ENCODE measurements at regions of chr16 and their contacts with region 1.

Region 1: DNA sequence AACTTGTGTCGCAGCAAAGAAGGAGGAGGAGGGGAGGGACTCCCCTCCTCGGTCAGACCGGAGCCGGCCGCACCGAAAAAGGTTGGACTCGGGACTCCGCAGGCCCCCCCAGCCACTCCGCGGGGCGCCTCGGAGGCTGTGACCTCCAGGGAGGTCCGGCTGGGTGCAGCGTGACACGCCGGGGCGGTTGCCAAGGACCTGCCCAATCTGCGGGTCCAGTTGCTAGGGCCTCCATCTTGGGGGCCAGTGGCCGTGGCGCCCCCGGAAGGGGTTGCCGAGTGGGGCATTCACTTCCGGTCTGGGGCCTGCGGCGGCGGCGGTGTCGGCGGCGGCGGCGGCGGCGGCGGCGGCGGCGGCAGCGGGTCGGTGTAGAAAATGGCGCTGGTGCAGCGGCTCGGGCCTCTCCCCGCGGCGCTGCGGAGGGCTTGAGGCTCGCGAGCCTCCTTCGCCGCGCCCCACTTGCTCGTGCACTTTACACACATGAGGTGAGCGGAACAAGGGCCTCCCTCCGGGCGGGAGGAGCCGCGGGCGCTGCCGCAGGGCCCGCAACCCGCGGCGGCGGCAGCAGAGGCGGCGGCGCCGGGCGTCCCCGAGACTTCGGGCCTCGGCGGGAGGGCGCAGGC is at the start of gene TNRC6A:
- DNase-seq: peak; percentile 87
- ATAC-seq: peak; percentile 77
- H3K4me3 Mint-ChIP-seq: peak within 1 kb of the TSS; percentile 99
- H3K27ac Mint-ChIP-seq: peak within 1 kb of the TSS; percentile 99
- H3K4me1 Mint-ChIP-seq: peaks cover 44% of the 10 kb centered on the region
- H3K27me3 Mint-ChIP-seq: no peaks in the 10 kb centered on the region
- total RNA-seq, gene TNRC6A: 34.6 to 46.1 TPM

Region 2: DNA sequence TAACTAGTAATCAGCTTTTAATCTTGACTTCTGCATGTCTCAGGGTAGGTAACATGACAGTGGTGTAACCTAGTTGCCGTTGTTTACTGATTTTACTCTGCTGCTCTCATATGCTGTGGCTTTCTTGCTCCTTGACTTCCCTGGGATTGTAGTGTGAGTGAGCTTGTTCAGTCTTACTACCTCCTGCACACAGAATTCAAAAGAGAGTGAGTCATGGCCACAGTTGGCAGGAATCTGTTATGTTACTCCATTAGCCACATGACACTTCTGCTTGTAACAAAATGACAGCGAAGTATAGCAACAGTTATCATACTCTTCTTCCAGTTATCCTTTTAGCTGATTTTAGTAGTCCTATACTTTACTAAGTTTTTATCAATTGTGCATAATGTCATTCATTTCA is 18.8 kb after region 1 on chr16:
- CTCF ChIA-PET with region 1: interaction called, 6 read pairs
- POLR2A ChIA-PET with region 1: interaction called, 8 read pairs
- intact Hi-C with region 1: loop called (anchors 1 kb)
- DNase-seq: peak; percentile 40
- ATAC-seq: peak; percentile 91
- H3K4me3 Mint-ChIP-seq: no peak overlapping the region
- H3K27ac Mint-ChIP-seq: peak overlapping the region; percentile 66
- H3K4me1 Mint-ChIP-seq: peaks cover 86% of the 10 kb centered on the region
- H3K27me3 Mint-ChIP-seq: no peaks in the 10 kb centered on the region

Region 3: GRCh38 chr16:24753437-24753836 is 24.0 kb after region 1 on chr16:
- CTCF ChIA-PET with region 1: interaction called, 6 read pairs
- POLR2A ChIA-PET with region 1: interaction called, 3 read pairs
- intact Hi-C with region 1: loop called (anchors 1 to 2 kb)
- DNase-seq: peak; percentile 48
- ATAC-seq: peak; percentile 95
- H3K4me3 Mint-ChIP-seq: peak overlapping the region; percentile 38
- H3K27ac Mint-ChIP-seq: peak overlapping the region; percentile 88
- H3K4me1 Mint-ChIP-seq: peaks cover 64% of the 10 kb centered on the region
- H3K27me3 Mint-ChIP-seq: no peaks in the 10 kb centered on the region

Region 4: DNA sequence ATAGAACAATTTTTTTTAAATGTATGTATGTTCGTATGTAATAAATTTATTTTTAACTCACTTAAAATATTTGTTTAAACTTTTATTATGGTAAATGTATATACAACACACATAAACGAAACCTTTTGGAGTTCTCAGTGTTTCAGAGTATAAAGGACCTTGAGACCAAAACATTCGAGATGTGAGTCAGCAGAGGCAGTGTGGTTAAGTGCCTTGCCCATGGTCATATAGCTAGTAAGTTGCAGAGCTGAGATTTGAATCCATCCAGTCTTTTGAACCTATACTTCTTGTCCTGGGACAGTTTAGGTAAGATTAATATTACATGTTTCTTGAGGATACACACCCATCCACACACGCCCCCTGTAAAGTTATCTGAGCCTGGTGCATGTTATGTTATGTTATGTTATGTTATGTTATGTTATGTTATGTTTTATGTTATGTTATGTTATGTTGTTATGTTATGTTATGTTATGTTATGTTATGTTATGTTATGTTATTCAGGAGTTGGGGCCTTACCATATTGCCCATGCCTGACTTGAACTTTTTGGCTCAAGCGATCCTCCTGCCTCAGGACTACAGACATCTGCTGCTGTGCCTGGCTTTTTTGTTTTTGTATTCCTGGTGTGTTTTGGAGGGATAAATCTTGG is 41.8 kb after region 1 on chr16:
- CTCF ChIA-PET with region 1: no interaction called
- POLR2A ChIA-PET with region 1: interaction called, 4 read pairs
- intact Hi-C with region 1: loop called in 1 of 2 experiments (anchors 5 kb)
- DNase-seq: peak; percentile 19
- ATAC-seq: peak; percentile 70
- H3K4me3 Mint-ChIP-seq: no peak overlapping the region
- H3K27ac Mint-ChIP-seq: peak overlapping the region; percentile 40
- H3K4me1 Mint-ChIP-seq: peaks cover 47% of the 10 kb centered on the region
- H3K27me3 Mint-ChIP-seq: no peaks in the 10 kb centered on the region

Region 5: DNA sequence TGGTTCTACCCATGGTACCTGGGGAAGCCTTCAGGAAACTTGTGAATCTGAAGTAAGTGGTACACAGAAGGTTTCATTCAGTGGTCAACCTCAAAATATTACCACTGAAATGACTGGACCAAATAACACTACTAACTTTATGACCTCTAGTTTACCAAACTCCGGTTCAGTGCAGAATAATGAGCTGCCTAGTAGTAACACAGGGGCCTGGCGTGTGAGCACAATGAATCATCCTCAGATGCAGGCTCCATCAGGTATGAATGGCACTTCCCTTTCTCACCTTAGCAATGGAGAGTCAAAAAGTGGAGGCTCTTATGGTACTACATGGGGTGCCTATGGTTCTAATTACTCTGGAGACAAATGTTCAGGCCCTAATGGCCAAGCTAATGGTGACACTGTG is 60.4 kb after region 1 on chr16:
- CTCF ChIA-PET with region 1: no interaction called
- POLR2A ChIA-PET with region 1: no interaction called
- intact Hi-C with region 1: no loop called
- DNase-seq: no peak
- ATAC-seq: no peak
- H3K4me3 Mint-ChIP-seq: no peak overlapping the region
- H3K27ac Mint-ChIP-seq: no peak overlapping the region
- H3K4me1 Mint-ChIP-seq: no peaks in the 10 kb centered on the region
- H3K27me3 Mint-ChIP-seq: no peaks in the 10 kb centered on the region

Region 6: GRCh38 chr16:25257504-25257955 is 528.1 kb after region 1 on chr16 and contains the start of gene ZKSCAN2:
- CTCF ChIA-PET with region 1: no interaction called
- POLR2A ChIA-PET with region 1: no interaction called
- intact Hi-C with region 1: loop called in 1 of 2 experiments (anchors 1 kb)
- DNase-seq: peak; percentile 92
- ATAC-seq: peak; percentile 82
- H3K4me3 Mint-ChIP-seq: peak within 1 kb of the TSS; percentile 93
- H3K27ac Mint-ChIP-seq: peak within 1 kb of the TSS; percentile 98
- H3K4me1 Mint-ChIP-seq: peaks cover 59% of the 10 kb centered on the region
- H3K27me3 Mint-ChIP-seq: no peaks in the 10 kb centered on the region
- total RNA-seq, gene ZKSCAN2: 5.5 to 5.6 TPM